Activated CD8-positive, alpha-beta T cell treated with anti-CD3 and anti-CD28 coated beads for 36 hours (primary cell): ENCODE measurements at regions of chr13 and their contacts with region 1.

Region 1: GRCh38 chr13:79679334-79679733 is 198.4 kb downstream of the NDFIP2 start:
- DNase-seq: peak; percentile 73
- ATAC-seq: peak; percentile 37
- H3K4me3 Mint-ChIP-seq: no peak overlapping the region
- H3K27ac Mint-ChIP-seq: no peak overlapping the region
- H3K4me1 Mint-ChIP-seq: no peaks in the 10 kb centered on the region
- H3K27me3 Mint-ChIP-seq: peaks cover 3% of the 10 kb centered on the region
- CTCF ChIP-seq: peak; percentile 83

Region 2: DNA sequence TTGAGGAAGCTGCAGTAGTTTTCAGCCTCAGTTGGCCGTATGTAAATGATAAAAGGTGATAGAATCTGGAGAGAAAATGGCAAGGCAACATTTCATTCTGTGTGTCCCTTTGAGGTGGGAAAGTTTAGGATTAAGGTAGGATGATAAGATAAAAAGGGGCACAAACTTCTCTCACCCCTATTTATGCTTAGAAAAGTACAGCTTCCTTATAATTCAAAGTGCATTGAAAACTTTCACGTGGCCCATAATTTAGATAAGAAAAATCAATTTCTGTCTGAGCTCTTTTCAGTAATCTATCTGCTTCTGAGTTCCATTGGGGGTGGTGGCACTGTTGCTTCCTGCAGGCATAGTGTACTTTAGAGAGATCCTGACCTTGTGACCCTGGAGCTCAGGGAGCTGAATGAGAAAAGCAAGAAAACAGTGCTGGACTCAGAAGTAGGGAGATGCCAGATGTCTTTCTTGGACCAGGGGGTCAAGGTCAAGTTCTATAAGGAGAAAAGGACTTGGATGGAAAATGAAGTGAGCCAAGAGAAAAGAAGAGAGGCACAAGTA is 11.1 kb before region 1 on chr13:
- CTCF ChIA-PET with region 1: interaction called, 27 read pairs
- POLR2A ChIA-PET with region 1: interaction called, 4 read pairs
- intact Hi-C with region 1: no loop called
- DNase-seq: no peak
- ATAC-seq: no peak
- H3K4me3 Mint-ChIP-seq: no peak overlapping the region
- H3K27ac Mint-ChIP-seq: no peak overlapping the region
- H3K4me1 Mint-ChIP-seq: no peaks in the 10 kb centered on the region
- H3K27me3 Mint-ChIP-seq: no peaks in the 10 kb centered on the region
- CTCF ChIP-seq: no peak

Region 3: GRCh38 chr13:81017513-81018152 is 1338.3 kb after region 1 on chr13:
- CTCF ChIA-PET with region 1: interaction called, 10 read pairs
- POLR2A ChIA-PET with region 1: no interaction called
- intact Hi-C with region 1: no loop called
- DNase-seq: no peak
- ATAC-seq: no peak
- H3K4me3 Mint-ChIP-seq: no peak overlapping the region
- H3K27ac Mint-ChIP-seq: no peak overlapping the region
- H3K4me1 Mint-ChIP-seq: no peaks in the 10 kb centered on the region
- H3K27me3 Mint-ChIP-seq: no peaks in the 10 kb centered on the region
- CTCF ChIP-seq: peak; percentile 61